ENCODE measurements at regions of chr16 and their contacts with region 1.

Region 1: GRCh38 chr16:50354629-50355456 is 13.9 kb downstream of the BRD7 start:
- DNase-seq: peak in 2 of 9 experiments; percentile 40 to 56
- ATAC-seq: peak; percentile 47
- H3K4me3 ChIP-seq: no peak overlapping the region
- H3K4me3 Mint-ChIP-seq: no peak overlapping the region
- H3K27ac ChIP-seq: no peak overlapping the region
- H3K27ac Mint-ChIP-seq: peak overlapping the region; percentile 60
- H3K4me1 ChIP-seq: no peaks in the 10 kb centered on the region
- H3K4me1 Mint-ChIP-seq: peaks cover 38% of the 10 kb centered on the region
- H3K27me3 ChIP-seq: no peaks in the 10 kb centered on the region
- H3K27me3 Mint-ChIP-seq: no peaks in the 10 kb centered on the region
- CTCF ChIP-seq: peak; percentile 94

Region 2: GRCh38 chr16:49350265-49351095 is 1004.4 kb before region 1 on chr16:
- CTCF ChIA-PET with region 1: no interaction called
- POLR2A ChIA-PET with region 1: no interaction called
- intact Hi-C with region 1: no loop called
- DNase-seq: peak in 7 of 9 experiments; percentile 7 to 38 (median 28)
- ATAC-seq: no peak
- H3K4me3 ChIP-seq: no peak overlapping the region
- H3K4me3 Mint-ChIP-seq: no peak overlapping the region
- H3K27ac ChIP-seq: no peak overlapping the region
- H3K27ac Mint-ChIP-seq: no peak overlapping the region
- H3K4me1 ChIP-seq: no peaks in the 10 kb centered on the region
- H3K4me1 Mint-ChIP-seq: no peaks in the 10 kb centered on the region
- H3K27me3 ChIP-seq: peaks cover 0 to 2% of the 10 kb centered on the region in 2 experiments
- H3K27me3 Mint-ChIP-seq: peaks cover 23% of the 10 kb centered on the region
- CTCF ChIP-seq: peak; percentile 20

Region 3: GRCh38 chr16:50024684-50025536 is 329.9 kb before region 1 on chr16 and contains the start of gene CNEP1R1:
- CTCF ChIA-PET with region 1: interaction called, 12 read pairs
- POLR2A ChIA-PET with region 1: no interaction called
- intact Hi-C with region 1: loop called in 1 of 2 experiments (anchors 5 kb)
- DNase-seq: peak; percentile 86 to 97 (median 91)
- ATAC-seq: peak; percentile 93
- H3K4me3 ChIP-seq: peak within 1 kb of the TSS; percentile 74 to 79
- H3K4me3 Mint-ChIP-seq: peak within 1 kb of the TSS; percentile 97
- H3K27ac ChIP-seq: peak within 1 kb of the TSS; percentile 49 to 65
- H3K27ac Mint-ChIP-seq: peak within 1 kb of the TSS; percentile 94
- H3K4me1 ChIP-seq: peaks cover 17% of the 10 kb centered on the region
- H3K4me1 Mint-ChIP-seq: peaks cover 27% of the 10 kb centered on the region
- H3K27me3 ChIP-seq: no peaks in the 10 kb centered on the region
- H3K27me3 Mint-ChIP-seq: no peaks in the 10 kb centered on the region
- CTCF ChIP-seq: peak; percentile 99
- total RNA-seq, gene CNEP1R1: 37.6 to 41.0 TPM

Region 4: DNA sequence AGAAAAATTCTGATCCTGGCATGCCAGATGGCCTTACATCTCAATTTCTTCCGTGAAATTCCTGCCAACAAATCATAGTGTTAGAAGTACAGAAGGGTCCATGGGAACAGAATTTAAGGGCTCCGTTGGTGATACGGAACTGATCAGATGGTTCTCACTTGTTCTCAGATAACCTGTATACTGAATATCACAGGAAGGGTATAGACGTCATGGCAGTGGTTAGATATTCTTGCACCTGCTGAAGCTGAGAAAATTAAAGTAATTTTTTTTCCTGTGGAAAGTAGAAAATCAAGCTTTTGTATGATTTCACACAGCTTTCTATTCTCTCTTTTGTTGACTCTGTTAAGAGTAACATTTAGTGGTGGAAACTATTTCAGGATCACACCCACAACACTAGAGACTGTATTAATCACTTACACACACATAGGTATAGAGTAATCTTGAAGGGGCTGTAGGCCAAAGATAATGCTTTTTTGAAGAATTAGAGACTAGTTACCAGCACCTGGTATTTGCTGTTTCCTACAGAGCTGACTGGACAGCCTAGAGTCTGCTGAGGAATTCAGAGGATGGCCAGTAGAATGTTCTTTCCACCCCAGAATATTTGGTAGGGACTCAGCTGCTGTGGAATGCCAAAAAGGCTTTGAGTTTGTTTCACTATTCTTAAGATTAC is 194.2 kb before region 1 on chr16:
- CTCF ChIA-PET with region 1: no interaction called
- POLR2A ChIA-PET with region 1: no interaction called
- intact Hi-C with region 1: no loop called
- DNase-seq: peak in 2 of 9 experiments; percentile 60 to 81
- ATAC-seq: peak; percentile 80
- H3K4me3 ChIP-seq: no peak overlapping the region
- H3K4me3 Mint-ChIP-seq: peak overlapping the region; percentile 46
- H3K27ac ChIP-seq: peak overlapping the region; percentile 24 to 50
- H3K27ac Mint-ChIP-seq: peak overlapping the region; percentile 84
- H3K4me1 ChIP-seq: peaks cover 66% of the 10 kb centered on the region
- H3K4me1 Mint-ChIP-seq: peaks cover 67% of the 10 kb centered on the region
- H3K27me3 ChIP-seq: no peaks in the 10 kb centered on the region
- H3K27me3 Mint-ChIP-seq: no peaks in the 10 kb centered on the region
- CTCF ChIP-seq: no peak

Region 5: DNA sequence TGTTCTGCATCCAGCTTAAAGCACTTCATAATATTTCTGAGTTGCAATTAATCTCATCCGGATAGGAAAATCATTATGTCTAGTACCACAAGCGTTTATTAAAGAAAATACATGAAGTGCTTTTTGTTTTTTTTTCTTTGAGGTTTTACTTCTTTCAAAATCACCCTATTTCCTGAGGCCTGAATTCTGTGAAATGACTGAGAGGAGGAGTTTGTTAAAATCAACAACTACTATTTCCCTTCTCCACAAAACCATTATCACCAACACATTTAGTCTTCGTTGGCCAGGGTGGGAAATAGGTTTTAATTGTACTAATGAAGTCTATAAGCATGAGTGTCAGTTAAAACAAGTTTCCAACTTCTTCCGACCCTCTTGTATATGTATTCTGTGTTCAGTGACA is 139.2 kb before region 1 on chr16:
- CTCF ChIA-PET with region 1: interaction called, 47 read pairs
- POLR2A ChIA-PET with region 1: no interaction called
- intact Hi-C with region 1: loop called (anchors 1 kb)
- DNase-seq: no peak
- ATAC-seq: no peak
- H3K4me3 ChIP-seq: no peak overlapping the region
- H3K4me3 Mint-ChIP-seq: no peak overlapping the region
- H3K27ac ChIP-seq: peak overlapping the region in 1 of 2 experiments; percentile 3
- H3K27ac Mint-ChIP-seq: no peak overlapping the region
- H3K4me1 ChIP-seq: no peaks in the 10 kb centered on the region
- H3K4me1 Mint-ChIP-seq: peaks cover 16% of the 10 kb centered on the region
- H3K27me3 ChIP-seq: no peaks in the 10 kb centered on the region
- H3K27me3 Mint-ChIP-seq: no peaks in the 10 kb centered on the region
- CTCF ChIP-seq: no peak

Region 6: GRCh38 chr16:50266337-50267091 is 88.3 kb before region 1 on chr16 and contains the start of gene ADCY7:
- CTCF ChIA-PET with region 1: interaction called, 18 read pairs
- POLR2A ChIA-PET with region 1: interaction called, 3 read pairs
- intact Hi-C with region 1: loop called in 1 of 2 experiments (anchors 1 kb)
- DNase-seq: peak; percentile 58 to 90 (median 88)
- ATAC-seq: peak; percentile 83
- H3K4me3 ChIP-seq: peak within 1 kb of the TSS; percentile 91 to 94
- H3K4me3 Mint-ChIP-seq: peak within 1 kb of the TSS; percentile 97
- H3K27ac ChIP-seq: peak within 1 kb of the TSS; percentile 77 to 86
- H3K27ac Mint-ChIP-seq: peak within 1 kb of the TSS; percentile 98
- H3K4me1 ChIP-seq: peaks cover 68% of the 10 kb centered on the region
- H3K4me1 Mint-ChIP-seq: peaks cover 71% of the 10 kb centered on the region
- H3K27me3 ChIP-seq: no peaks in the 10 kb centered on the region
- H3K27me3 Mint-ChIP-seq: no peaks in the 10 kb centered on the region
- CTCF ChIP-seq: no peak
- total RNA-seq, gene ADCY7: 117 to 126 TPM

Region 7: DNA sequence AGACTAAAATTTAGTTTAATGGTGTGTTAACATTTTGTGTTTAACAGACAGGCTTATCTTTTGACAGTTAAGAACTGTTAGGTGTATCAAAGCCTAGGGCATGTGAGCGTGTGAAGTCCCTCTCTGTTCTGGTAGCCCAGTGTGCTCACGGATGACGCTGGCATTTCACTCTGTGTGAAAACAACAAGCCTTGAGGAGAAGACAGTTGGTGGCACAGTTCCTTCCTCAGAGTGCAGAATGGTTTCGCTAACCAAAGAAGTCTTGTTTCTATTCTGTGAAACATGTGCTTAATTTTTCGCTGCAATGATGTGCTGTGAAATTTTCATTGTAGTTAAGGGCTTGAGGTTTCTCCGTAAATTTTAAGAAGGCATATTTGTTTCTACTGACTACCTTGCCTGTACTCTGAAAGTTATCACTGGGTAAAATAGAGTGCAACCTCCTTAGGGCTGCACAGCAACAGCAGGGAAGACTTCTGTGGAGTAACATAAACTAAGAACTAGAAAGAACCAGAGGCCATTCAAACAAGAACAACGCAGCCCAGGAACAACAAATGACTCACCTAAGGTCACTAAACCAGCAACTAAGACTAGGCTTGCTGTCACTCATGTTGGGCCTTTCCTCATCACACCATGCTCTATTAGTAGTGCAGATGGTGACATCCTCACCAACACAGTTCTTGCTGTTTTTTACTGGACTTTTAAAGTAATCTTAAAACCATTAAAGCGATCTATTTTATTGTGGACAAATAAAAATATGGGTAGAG is 19.5 kb before region 1 on chr16:
- CTCF ChIA-PET with region 1: interaction called, 217 read pairs
- POLR2A ChIA-PET with region 1: interaction called, 16 read pairs
- intact Hi-C with region 1: no loop called
- DNase-seq: peak in 7 of 9 experiments; percentile 27 to 86 (median 72)
- ATAC-seq: peak; percentile 76
- H3K4me3 ChIP-seq: no peak overlapping the region
- H3K4me3 Mint-ChIP-seq: peak overlapping the region; percentile 46
- H3K27ac ChIP-seq: peak overlapping the region; percentile 55 to 57
- H3K27ac Mint-ChIP-seq: peak overlapping the region; percentile 99
- H3K4me1 ChIP-seq: peaks cover 21% of the 10 kb centered on the region
- H3K4me1 Mint-ChIP-seq: peaks cover 74% of the 10 kb centered on the region
- H3K27me3 ChIP-seq: no peaks in the 10 kb centered on the region
- H3K27me3 Mint-ChIP-seq: no peaks in the 10 kb centered on the region
- CTCF ChIP-seq: no peak

Region 8: GRCh38 chr16:50448501-50448900 is 93.7 kb after region 1 on chr16:
- CTCF ChIA-PET with region 1: no interaction called
- POLR2A ChIA-PET with region 1: no interaction called
- intact Hi-C with region 1: no loop called
- DNase-seq: no peak
- ATAC-seq: no peak
- H3K4me3 ChIP-seq: no peak overlapping the region
- H3K4me3 Mint-ChIP-seq: no peak overlapping the region
- H3K27ac ChIP-seq: no peak overlapping the region
- H3K27ac Mint-ChIP-seq: no peak overlapping the region
- H3K4me1 ChIP-seq: no peaks in the 10 kb centered on the region
- H3K4me1 Mint-ChIP-seq: no peaks in the 10 kb centered on the region
- H3K27me3 ChIP-seq: no peaks in the 10 kb centered on the region
- H3K27me3 Mint-ChIP-seq: peaks cover 6% of the 10 kb centered on the region
- CTCF ChIP-seq: no peak

Measured in CD8-positive, alpha-beta T cell (primary cell).